PC-3 (cell line): ENCODE measurements at regions of chr7 and their contacts with region 1.

Region 1: DNA sequence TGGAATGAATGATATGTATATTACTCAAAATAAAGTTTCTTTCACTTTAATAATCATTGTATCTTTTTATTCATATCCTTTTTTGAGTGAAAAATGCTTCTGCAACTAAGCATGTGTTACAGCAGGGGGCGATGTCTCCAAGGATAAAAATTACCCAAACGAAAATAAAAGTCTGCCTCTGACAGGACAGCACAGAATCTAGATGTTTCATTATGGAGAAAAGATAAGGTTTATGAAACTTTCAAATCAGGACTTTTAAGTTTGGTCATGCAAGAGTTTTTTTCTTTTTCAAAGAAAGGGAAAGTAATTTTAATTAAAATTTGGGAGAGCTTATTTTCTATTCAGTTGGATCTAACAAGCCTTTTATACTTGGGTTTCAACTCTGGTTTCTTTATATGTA is 48.4 kb downstream of the TES start:
- DNase-seq: peak; percentile 78
- ATAC-seq: 0 out of 2 replicates have a peak, but pooled peaks have one; percentile 16
- H3K4me3 ChIP-seq: no peak overlapping the region
- H3K27ac ChIP-seq: peak overlapping the region; percentile 34; the same call in 1 of the 2 replicates
- H3K4me1 ChIP-seq: peaks cover 18% of the 10 kb centered on the region
- H3K27me3 ChIP-seq: no peaks in the 10 kb centered on the region
- CTCF ChIP-seq: peak; percentile 89

Region 2: DNA sequence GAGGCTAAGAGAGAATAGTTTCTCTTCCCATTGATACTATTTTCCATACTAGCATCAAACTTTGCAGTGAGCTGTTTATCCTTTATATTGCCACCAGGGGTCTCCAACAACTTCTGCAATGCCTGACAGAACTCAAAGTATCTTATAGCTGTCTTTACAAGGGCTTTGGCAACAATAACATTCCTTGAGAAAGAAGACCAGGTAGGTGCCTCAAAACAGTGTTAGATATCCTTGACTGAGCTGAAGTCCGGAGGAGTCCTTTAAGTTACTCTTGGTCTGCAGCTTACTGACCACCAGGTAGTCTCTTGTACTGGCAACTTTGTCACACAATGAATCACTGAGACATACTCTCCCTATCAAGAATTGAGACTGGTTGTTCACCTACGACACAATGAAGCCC is 78.4 kb before region 1 on chr7:
- CTCF ChIA-PET with region 1: interaction called, 16 read pairs
- POLR2A ChIA-PET with region 1: interaction called, 3 read pairs
- intact Hi-C with region 1: no loop called
- DNase-seq: peak; percentile 73
- ATAC-seq: peak; percentile 76
- H3K4me3 ChIP-seq: no peak overlapping the region
- H3K27ac ChIP-seq: no peak overlapping the region
- H3K4me1 ChIP-seq: peaks cover 7% of the 10 kb centered on the region; the same call in 1 of the 2 replicates
- H3K27me3 ChIP-seq: no peaks in the 10 kb centered on the region
- CTCF ChIP-seq: peak; percentile 86

Region 3: GRCh38 chr7:116340943-116341907 is 82.5 kb after region 1 on chr7:
- CTCF ChIA-PET with region 1: no interaction called
- POLR2A ChIA-PET with region 1: interaction called, 5 read pairs
- intact Hi-C with region 1: loop called (anchors 5 kb)
- DNase-seq: peak; percentile 27
- ATAC-seq: no peak
- H3K4me3 ChIP-seq: no peak overlapping the region
- H3K27ac ChIP-seq: peak overlapping the region; percentile 46
- H3K4me1 ChIP-seq: peaks cover 42% of the 10 kb centered on the region
- H3K27me3 ChIP-seq: no peaks in the 10 kb centered on the region
- CTCF ChIP-seq: peak; percentile 59

Region 4: GRCh38 chr7:116384936-116385635 is 126.4 kb after region 1 on chr7:
- CTCF ChIA-PET with region 1: interaction called, 22 read pairs
- POLR2A ChIA-PET with region 1: no interaction called
- intact Hi-C with region 1: no loop called
- DNase-seq: peak; percentile 81
- ATAC-seq: peak; percentile 98
- H3K4me3 ChIP-seq: peak overlapping the region; percentile 1; the same call in 1 of the 2 replicates
- H3K27ac ChIP-seq: peak overlapping the region; percentile 70
- H3K4me1 ChIP-seq: peaks cover 18% of the 10 kb centered on the region
- H3K27me3 ChIP-seq: no peaks in the 10 kb centered on the region
- CTCF ChIP-seq: no peak

Region 5: DNA sequence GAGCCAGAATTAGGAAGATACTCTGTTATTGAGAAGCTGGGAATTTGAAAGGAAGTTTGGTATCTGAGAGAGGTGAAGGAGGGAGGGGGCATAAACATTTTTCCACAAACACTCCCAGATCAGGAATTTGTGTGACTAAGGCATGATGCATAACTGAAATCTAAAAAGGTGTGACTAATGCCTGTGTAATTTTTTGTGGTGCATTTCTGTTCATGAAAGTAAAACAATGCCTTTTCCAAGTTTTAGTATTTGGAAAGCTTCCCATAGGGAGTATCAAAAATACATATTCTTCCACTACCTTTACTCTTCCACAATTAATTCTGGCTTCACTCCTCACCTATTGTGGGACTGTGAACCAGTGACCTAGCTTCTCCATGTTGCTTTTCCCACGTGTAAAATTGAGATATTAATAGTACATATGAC is 184.4 kb after region 1 on chr7:
- CTCF ChIA-PET with region 1: no interaction called
- POLR2A ChIA-PET with region 1: interaction called, 17 read pairs
- intact Hi-C with region 1: loop called (anchors 1 kb)
- DNase-seq: peak; percentile 98
- ATAC-seq: peak; percentile 73
- H3K4me3 ChIP-seq: no peak overlapping the region
- H3K27ac ChIP-seq: peak overlapping the region; percentile 91
- H3K4me1 ChIP-seq: peaks cover 57% of the 10 kb centered on the region
- H3K27me3 ChIP-seq: no peaks in the 10 kb centered on the region
- CTCF ChIP-seq: no peak

Region 6: DNA sequence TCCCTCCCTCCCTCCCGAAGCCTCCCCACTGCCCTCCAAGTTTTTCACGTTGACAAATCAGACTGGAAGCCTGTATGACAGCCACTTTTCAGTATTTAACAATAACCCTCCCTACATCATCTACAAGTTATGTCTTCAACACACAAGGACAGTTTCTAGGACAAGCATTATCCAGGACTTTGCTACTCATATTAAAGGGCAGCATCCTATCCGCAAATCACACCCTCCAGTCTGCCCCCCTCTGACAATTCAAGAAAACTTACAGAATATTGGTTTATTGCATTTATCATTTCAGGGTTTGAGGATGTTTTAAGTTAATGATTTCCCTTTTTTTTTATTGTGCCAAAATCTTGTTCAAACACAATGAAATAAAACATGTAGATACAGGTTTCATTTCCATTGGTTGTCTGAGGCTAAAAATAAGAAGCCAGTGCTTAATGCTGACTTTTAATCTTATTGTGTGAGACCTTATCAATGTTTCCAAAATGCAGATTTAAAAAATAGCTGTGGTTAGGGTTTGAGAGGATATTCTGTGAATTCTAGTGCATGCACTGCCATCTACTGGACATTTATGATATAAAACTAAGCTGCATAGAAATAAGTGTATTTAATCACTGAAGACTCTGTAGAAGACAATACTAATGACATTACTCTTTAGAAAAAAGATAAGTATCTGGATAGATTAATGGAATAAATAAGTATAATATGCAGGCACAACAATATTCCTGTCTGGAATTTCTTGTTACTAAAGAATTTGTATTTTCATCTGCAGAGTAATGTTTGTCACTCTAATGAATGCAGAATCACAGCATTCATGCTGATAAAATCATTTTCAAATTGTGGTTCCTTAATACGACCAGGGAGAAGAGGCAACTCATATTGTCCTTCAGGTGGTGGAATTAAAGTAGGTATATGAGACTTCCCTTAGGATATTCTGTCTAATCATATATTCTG is 330.2 kb after region 1 on chr7:
- CTCF ChIA-PET with region 1: interaction called, 7 read pairs
- POLR2A ChIA-PET with region 1: interaction called, 28 read pairs
- intact Hi-C with region 1: loop called (anchors 1 kb)
- DNase-seq: peak; percentile 88
- ATAC-seq: peak; percentile 49
- H3K4me3 ChIP-seq: no peak overlapping the region
- H3K27ac ChIP-seq: peak overlapping the region; percentile 3; the same call in 1 of the 2 replicates
- H3K4me1 ChIP-seq: peaks cover 26% of the 10 kb centered on the region
- H3K27me3 ChIP-seq: no peaks in the 10 kb centered on the region
- CTCF ChIP-seq: peak; percentile 87

Region 7: GRCh38 chr7:116809636-116810266 is 551.0 kb after region 1 on chr7:
- CTCF ChIA-PET with region 1: no interaction called
- POLR2A ChIA-PET with region 1: no interaction called
- intact Hi-C with region 1: loop called (anchors 2 kb)
- DNase-seq: peak; percentile 87
- ATAC-seq: peak; percentile 82
- H3K4me3 ChIP-seq: peak overlapping the region; percentile 42
- H3K27ac ChIP-seq: peak overlapping the region; percentile 76
- H3K4me1 ChIP-seq: peaks cover 38% of the 10 kb centered on the region
- H3K27me3 ChIP-seq: no peaks in the 10 kb centered on the region
- CTCF ChIP-seq: peak; percentile 85